Right lobe of liver (tissue), 6 donors: ENCODE measurements at regions of chr14 and their contacts with region 1.

Region 1: GRCh38 chr14:24093901-24094761 is at the start of gene PCK2:
- DNase-seq: peak; percentile 98 to 99 (median 99)
- ATAC-seq: peak; percentile 83 to 93 (median 86)
- H3K4me3 ChIP-seq: peak within 1 kb of the TSS; percentile 77 to 98 (median 90)
- H3K27ac ChIP-seq: peak within 1 kb of the TSS; percentile 89 to 97 (median 94)
- H3K4me1 ChIP-seq: peaks cover 0 to 57% (median 26%) of the 10 kb centered on the region in 4 donors
- H3K27me3 ChIP-seq: no peaks in the 10 kb centered on the region
- CTCF ChIP-seq: no peak
- POLR2A ChIP-seq: peak; percentile 97
- total RNA-seq, gene PCK2: 124 to 615 (median 240) TPM

Region 2: DNA sequence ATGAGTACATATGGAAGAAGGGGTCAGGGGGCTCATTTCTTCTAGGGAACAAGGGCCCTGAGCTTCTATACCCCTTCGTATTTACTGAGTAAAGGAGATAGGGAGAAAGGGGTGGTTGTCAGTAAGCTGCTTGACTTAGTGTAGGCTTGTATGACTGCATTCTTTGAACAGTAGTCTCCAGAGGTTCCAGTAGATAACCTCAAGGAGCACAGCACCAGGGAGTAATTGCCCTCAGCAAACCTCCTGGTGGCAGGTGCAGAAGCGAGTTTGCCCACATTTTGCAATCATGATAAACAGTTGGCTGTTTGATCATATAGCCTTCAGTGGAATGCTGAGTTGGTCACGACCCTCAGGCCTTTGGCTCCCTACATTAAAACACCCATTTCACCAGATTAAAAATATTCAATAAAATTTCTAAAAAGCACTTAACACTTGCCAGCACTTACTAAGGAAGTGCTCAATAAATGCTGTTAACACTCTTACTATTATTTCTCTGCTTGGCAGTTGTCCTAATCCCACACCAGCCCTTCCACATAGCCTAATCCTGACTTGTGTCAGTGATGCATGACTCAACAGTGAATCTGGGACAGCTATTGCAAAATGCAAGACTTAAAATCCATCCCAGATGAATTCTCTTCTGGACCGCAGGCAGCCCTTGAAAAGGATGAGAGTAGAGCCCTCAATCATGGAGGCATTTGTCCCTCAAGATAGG is 109.1 kb before region 1 on chr14:
- intact Hi-C with region 1: no loop called
- DNase-seq: no peak
- ATAC-seq: no peak
- H3K4me3 ChIP-seq: no peak overlapping the region
- H3K27ac ChIP-seq: no peak overlapping the region
- H3K4me1 ChIP-seq: peaks cover 0 to 5% (median 0%) of the 10 kb centered on the region in 4 donors
- H3K27me3 ChIP-seq: no peaks in the 10 kb centered on the region
- CTCF ChIP-seq: no peak
- POLR2A ChIP-seq: no peak

Region 3: GRCh38 chr14:24058260-24058950 is 35.7 kb before region 1 on chr14:
- intact Hi-C with region 1: loop called (anchors 5 kb)
- DNase-seq: peak in 2 of 3 donors; percentile 71 to 84
- ATAC-seq: peak; percentile 64 to 83 (median 72)
- H3K4me3 ChIP-seq: no peak overlapping the region
- H3K27ac ChIP-seq: no peak overlapping the region
- H3K4me1 ChIP-seq: peaks cover 0 to 48% (median 17%) of the 10 kb centered on the region in 4 donors
- H3K27me3 ChIP-seq: no peaks in the 10 kb centered on the region
- CTCF ChIP-seq: peak; percentile 75 to 95 (median 86)
- POLR2A ChIP-seq: no peak

Region 4: GRCh38 chr14:24132061-24132685 is 38.0 kb after region 1 on chr14:
- intact Hi-C with region 1: no loop called
- DNase-seq: peak in 2 of 3 donors; percentile 60 to 81
- ATAC-seq: peak in 2 of 4 donors; percentile 6 to 15
- H3K4me3 ChIP-seq: peak overlapping the region in 1 of 3 donors; percentile 18
- H3K27ac ChIP-seq: peak overlapping the region in 1 of 3 donors; percentile 86
- H3K4me1 ChIP-seq: peaks cover 0 to 42% (median 15%) of the 10 kb centered on the region in 4 donors
- H3K27me3 ChIP-seq: no peaks in the 10 kb centered on the region
- CTCF ChIP-seq: no peak
- POLR2A ChIP-seq: peak; percentile 25